ENCODE measurements at regions of chr5 and their contacts with region 1.

Region 1: DNA sequence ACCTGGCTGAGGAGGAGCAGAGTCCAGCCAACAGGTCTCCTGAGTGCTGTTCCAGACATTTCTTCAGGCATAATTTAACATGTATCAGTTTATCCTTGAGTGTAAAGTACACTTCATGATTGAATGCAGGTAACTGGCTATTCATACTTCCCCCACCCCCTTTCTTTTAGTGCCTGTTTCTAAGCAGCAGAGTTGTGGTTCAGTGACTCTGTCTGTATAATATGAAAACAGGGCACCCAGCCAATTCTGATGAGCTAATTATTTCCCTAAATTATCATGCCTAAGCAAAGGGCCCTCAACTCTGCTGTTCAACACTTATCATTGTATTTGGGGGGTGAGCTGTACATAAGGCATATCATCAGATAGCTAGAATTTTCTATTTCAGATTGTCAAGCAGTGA is 51.9 kb upstream of the ZSWIM6 start:
- DNase-seq: no peak
- H3K4me3 Mint-ChIP-seq: no peak overlapping the region
- H3K27ac Mint-ChIP-seq: no peak overlapping the region
- H3K4me1 Mint-ChIP-seq: peaks cover 30% of the 10 kb centered on the region
- H3K27me3 Mint-ChIP-seq: no peaks in the 10 kb centered on the region

Region 2: DNA sequence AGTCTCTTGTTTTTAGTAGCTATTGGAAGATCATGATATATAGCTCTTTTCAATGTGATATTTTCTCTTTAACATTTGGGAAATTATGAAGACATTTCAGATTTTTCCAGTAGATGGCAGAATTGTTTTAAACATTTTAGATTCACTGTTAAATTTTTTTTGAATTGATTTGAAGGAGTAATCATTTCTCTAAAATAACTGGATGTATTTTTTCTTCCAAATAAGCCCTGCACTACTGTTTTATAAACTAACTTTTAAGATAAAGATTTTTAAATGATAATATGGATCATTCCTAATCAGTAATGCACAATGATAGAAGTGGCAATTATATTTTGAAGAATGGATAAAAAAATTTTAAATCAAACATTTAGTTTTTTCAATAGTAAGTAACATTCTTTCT is 321.0 kb before region 1 on chr5:
- intact Hi-C with region 1: no loop called
- DNase-seq: no peak
- H3K4me3 Mint-ChIP-seq: no peak overlapping the region
- H3K27ac Mint-ChIP-seq: no peak overlapping the region
- H3K4me1 Mint-ChIP-seq: peaks cover 2% of the 10 kb centered on the region
- H3K27me3 Mint-ChIP-seq: no peaks in the 10 kb centered on the region

Region 3: DNA sequence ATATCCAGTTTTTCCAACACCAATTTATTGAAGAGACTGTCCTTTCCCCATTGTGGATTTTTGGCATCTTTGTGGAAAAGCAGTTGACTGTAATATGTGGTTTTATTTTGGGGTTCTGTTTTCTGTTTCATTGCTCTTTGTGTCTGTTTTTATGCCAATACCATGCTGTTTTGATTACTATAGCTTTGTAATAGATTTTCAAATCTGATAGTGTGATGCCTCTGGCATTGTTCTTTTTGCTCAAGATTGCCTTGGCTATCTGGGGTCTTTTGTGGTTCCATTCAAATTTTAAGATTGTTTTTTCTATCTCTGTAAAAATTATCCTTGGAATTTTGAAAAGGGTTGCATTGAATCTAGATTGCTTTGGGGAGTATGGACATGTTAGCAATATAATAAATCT is 235.7 kb before region 1 on chr5:
- intact Hi-C with region 1: loop called (anchors 2 kb)
- DNase-seq: no peak
- H3K4me3 Mint-ChIP-seq: no peak overlapping the region
- H3K27ac Mint-ChIP-seq: no peak overlapping the region
- H3K4me1 Mint-ChIP-seq: peaks cover 5% of the 10 kb centered on the region
- H3K27me3 Mint-ChIP-seq: no peaks in the 10 kb centered on the region

Region 4: GRCh38 chr5:61202213-61202612 is 78.0 kb before region 1 on chr5:
- intact Hi-C with region 1: loop called (anchors 2 kb)
- DNase-seq: no peak
- H3K4me3 Mint-ChIP-seq: no peak overlapping the region
- H3K27ac Mint-ChIP-seq: peak overlapping the region; percentile 12
- H3K4me1 Mint-ChIP-seq: peaks cover 9% of the 10 kb centered on the region
- H3K27me3 Mint-ChIP-seq: peaks cover 4% of the 10 kb centered on the region

Region 5: DNA sequence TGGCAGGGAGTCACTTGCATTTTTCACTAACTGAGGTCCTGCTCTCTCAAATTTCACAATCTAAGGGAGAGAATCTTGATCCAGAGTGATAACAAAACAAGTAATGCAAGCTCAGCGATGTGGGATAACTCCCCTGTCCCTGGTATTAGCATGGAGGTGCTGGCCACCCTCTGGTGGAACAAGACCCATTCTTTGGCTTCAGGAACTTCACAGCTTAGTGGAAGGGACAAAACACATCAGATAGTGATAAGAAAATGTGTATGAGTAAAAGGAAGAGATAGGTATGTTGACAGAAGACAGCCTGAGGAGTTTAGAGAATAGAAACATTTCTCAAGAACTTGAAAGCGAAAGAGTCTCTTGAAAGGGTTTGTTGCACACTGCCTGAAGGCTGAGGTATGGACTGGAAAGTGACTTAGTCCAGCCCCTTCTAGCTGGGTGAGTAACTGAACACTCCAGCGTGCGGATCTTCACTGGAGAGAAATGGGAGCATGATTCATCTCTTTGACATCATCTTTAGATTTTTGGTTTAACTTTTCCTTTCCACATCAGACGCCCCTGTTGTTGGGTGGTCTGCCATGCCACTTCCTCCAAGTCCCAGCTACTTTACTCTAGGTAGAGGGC is 26.4 kb after region 1 on chr5:
- intact Hi-C with region 1: loop called (anchors 1 kb)
- DNase-seq: peak; percentile 46
- H3K4me3 Mint-ChIP-seq: peak overlapping the region; percentile 27
- H3K27ac Mint-ChIP-seq: peak overlapping the region; percentile 95
- H3K4me1 Mint-ChIP-seq: peaks cover 38% of the 10 kb centered on the region
- H3K27me3 Mint-ChIP-seq: no peaks in the 10 kb centered on the region

Region 6: GRCh38 chr5:61408476-61409168 is 128.4 kb after region 1 on chr5:
- intact Hi-C with region 1: loop called (anchors 5 kb)
- DNase-seq: peak; percentile 89
- H3K4me3 Mint-ChIP-seq: peak overlapping the region; percentile 54
- H3K27ac Mint-ChIP-seq: no peak overlapping the region
- H3K4me1 Mint-ChIP-seq: peaks cover 20% of the 10 kb centered on the region
- H3K27me3 Mint-ChIP-seq: peaks cover 5% of the 10 kb centered on the region

Region 7: DNA sequence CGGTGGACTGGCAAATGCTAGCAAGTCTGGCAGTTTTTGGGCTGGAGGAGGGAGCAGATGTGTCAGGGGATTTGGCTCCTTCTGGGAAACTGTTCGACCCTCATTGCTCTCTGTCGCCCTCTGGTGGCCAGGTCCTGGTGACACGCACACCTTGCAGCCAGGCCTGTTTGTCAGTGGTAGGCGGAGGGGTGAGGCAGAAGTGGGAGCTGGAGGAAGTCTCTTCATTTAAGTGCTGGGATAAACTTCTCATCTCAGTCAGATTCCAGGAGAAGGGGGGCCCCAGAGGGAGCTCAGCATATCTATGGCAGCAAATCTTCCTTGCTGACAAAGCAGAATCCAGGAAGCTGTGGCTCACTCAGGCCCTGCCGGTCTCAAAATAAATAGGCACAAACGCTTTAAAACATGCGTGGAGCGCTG is 378.4 kb after region 1 on chr5:
- intact Hi-C with region 1: loop called (anchors 5 kb)
- DNase-seq: peak; percentile 56
- H3K4me3 Mint-ChIP-seq: no peak overlapping the region
- H3K27ac Mint-ChIP-seq: no peak overlapping the region
- H3K4me1 Mint-ChIP-seq: peaks cover 2% of the 10 kb centered on the region
- H3K27me3 Mint-ChIP-seq: peaks cover 14% of the 10 kb centered on the region

Measured in activated T-helper 2 cell treated with anti-CD3 and anti-CD28 coated beads, Interferon-gamma antibody, Interleukin-2, Interleukin-4, amounts not matched to agents 10 μg/mL and 5 μg/mL and 100 μg/mL, durations not matched to agents 14 hours and 24 hours and 36 hours (primary cell).